Sigmoid colon (tissue), 7 donors: ENCODE measurements at regions of chr10 and their contacts with region 1.

Region 1: DNA sequence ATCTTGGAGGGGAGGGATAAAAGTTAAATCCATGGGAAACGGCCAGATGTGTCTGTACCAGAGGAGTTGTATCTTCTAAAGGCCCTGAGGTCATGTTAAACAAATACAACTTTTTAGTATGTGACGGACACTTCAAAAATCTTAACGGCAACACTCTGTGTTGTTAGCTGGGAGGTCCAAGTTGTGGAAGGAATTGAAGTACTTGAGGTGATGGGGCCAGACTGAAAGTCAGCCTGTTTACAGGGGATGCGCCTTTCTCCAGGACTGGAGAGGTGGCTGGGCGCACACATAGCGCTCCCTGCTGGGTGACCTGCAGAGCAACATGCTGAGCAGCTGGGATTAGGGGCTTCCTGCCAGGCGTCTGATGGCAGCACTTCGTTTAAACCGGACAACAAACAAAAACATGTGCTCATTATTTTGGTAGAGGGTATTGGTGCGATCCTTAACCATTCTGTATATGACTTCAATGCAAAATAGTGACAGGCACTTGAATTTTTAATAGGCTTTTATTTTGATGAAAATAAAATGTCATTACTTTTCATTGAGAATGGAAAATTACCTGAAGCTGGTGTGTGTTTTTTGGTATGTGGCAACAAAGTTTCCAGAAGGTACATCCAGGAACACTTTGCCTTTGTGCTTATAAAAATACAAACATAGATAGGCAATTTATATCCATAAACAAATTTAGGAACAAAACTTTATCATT is 198.2 kb downstream of the MLLT10 start:
- DNase-seq: peak; percentile 86
- H3K4me3 ChIP-seq: no peak overlapping the region
- H3K27ac ChIP-seq: no peak overlapping the region
- H3K4me1 ChIP-seq: peaks cover 0 to 7% (median 0%) of the 10 kb centered on the region in 4 donors
- H3K27me3 ChIP-seq: no peaks in the 10 kb centered on the region
- CTCF ChIP-seq: peak; percentile 46 to 80 (median 66)
- EP300 ChIP-seq: no peak
- POLR2A ChIP-seq: no peak

Region 2: GRCh38 chr10:21078410-21079329 is 653.5 kb before region 1 on chr10:
- intact Hi-C with region 1: loop called (anchors 5 kb)
- DNase-seq: peak; percentile 68
- H3K4me3 ChIP-seq: no peak overlapping the region
- H3K27ac ChIP-seq: no peak overlapping the region
- H3K4me1 ChIP-seq: no peaks in the 10 kb centered on the region
- H3K27me3 ChIP-seq: no peaks in the 10 kb centered on the region
- CTCF ChIP-seq: peak in 3 of 4 experiments; percentile 35 to 63 (median 36)
- EP300 ChIP-seq: no peak
- POLR2A ChIP-seq: no peak

Region 3: GRCh38 chr10:21278491-21279239 is 453.6 kb before region 1 on chr10:
- intact Hi-C with region 1: loop called (anchors 10 kb)
- DNase-seq: peak; percentile 88
- H3K4me3 ChIP-seq: no peak overlapping the region
- H3K27ac ChIP-seq: no peak overlapping the region
- H3K4me1 ChIP-seq: no peaks in the 10 kb centered on the region
- H3K27me3 ChIP-seq: no peaks in the 10 kb centered on the region
- CTCF ChIP-seq: peak in 3 of 4 experiments; percentile 41 to 59 (median 49)
- EP300 ChIP-seq: no peak
- POLR2A ChIP-seq: no peak

Region 4: GRCh38 chr10:22010973-22011408 is 278.8 kb after region 1 on chr10:
- intact Hi-C with region 1: no loop called
- DNase-seq: no peak
- H3K4me3 ChIP-seq: no peak overlapping the region
- H3K27ac ChIP-seq: no peak overlapping the region
- H3K4me1 ChIP-seq: peaks cover 0 to 5% (median 0%) of the 10 kb centered on the region in 4 donors
- H3K27me3 ChIP-seq: no peaks in the 10 kb centered on the region
- CTCF ChIP-seq: peak in 2 of 4 experiments; percentile 6 to 57
- EP300 ChIP-seq: no peak
- POLR2A ChIP-seq: no peak